HEK293 (cell line): ENCODE measurements at regions of chr15 and their contacts with region 1.

Region 1: DNA sequence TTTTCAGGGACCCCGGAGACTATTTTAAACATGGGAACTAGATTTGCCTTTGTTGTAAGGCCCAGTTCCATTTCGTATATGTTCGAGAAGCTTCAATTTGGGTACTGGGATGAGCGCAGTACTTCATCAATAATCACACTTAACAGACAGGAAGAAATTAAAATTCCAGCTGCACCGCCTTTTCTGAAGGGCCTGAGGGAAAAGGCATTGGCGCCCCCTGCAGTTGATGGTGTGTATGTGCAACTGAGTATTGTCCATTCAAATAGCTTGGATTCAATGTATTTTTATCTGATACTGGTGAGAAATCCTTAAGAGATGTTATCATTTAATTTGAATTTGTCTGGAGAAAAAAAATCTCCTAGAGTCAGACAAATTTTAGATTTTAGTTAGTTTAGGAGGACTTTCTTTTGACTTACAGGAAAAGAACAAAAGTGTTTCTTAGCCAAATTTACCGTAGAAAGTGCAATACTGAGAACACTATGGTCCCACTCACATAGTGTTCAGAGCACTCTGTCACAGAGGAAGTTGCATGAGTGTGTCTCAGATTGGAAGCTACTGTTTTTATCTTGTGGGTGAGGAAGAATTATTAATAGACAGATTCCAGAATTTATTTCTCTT is 5.4 kb upstream of the ALDH1A2 start:
- H3K4me3 ChIP-seq: no peak overlapping the region
- H3K27ac ChIP-seq: no peak overlapping the region
- H3K4me1 ChIP-seq: no peaks in the 10 kb centered on the region; the same call in 1 of the 2 replicates
- CTCF ChIP-seq: peak; percentile 36; the same call in 1 of the 2 replicates

Region 2: GRCh38 chr15:57751177-57751800 is 319.6 kb before region 1 on chr15:
- CTCF ChIA-PET with region 1: interaction called, 38 read pairs
- POLR2A ChIA-PET with region 1: no interaction called
- H3K4me3 ChIP-seq: no peak overlapping the region
- H3K27ac ChIP-seq: no peak overlapping the region
- H3K4me1 ChIP-seq: peaks cover 4% of the 10 kb centered on the region; the same call in 1 of the 2 replicates
- CTCF ChIP-seq: no peak

Region 3: GRCh38 chr15:57866149-57866736 is 204.7 kb before region 1 on chr15:
- CTCF ChIA-PET with region 1: interaction called, 54 read pairs
- POLR2A ChIA-PET with region 1: no interaction called
- H3K4me3 ChIP-seq: no peak overlapping the region
- H3K27ac ChIP-seq: no peak overlapping the region
- H3K4me1 ChIP-seq: no peaks in the 10 kb centered on the region
- CTCF ChIP-seq: no peak

Region 4: GRCh38 chr15:58086491-58086890 is 15.6 kb after region 1 on chr15:
- CTCF ChIA-PET with region 1: interaction called, 12 read pairs
- POLR2A ChIA-PET with region 1: no interaction called
- H3K4me3 ChIP-seq: no peak overlapping the region
- H3K27ac ChIP-seq: no peak overlapping the region
- H3K4me1 ChIP-seq: no peaks in the 10 kb centered on the region
- CTCF ChIP-seq: no peak